GM12878 (cell line): ENCODE measurements at regions of chr1 and their contacts with region 1.

Region 1: DNA sequence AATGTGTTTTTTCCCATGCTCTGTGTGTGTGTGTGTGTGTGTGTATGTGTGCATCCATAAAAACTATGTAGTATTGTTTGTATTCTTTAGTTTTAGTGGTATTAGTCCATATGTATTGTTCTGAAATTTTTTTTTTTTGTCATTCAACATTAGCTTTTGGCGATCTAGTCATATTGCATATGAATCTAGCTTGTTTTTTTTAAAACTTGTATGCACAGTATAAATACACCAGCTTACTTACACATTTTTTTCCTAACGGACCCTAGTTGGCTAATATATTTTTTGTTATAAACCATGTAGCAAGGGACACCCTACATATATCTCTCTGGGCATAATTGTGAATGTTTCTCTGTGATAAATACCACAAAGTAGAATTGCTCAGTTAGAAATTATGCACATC is 359.7 kb downstream of the SRGAP2C start:
- DNase-seq: no peak
- ATAC-seq: no peak
- H3K4me3 ChIP-seq: no peak overlapping the region
- H3K27ac ChIP-seq: no peak overlapping the region
- H3K4me1 ChIP-seq: no peaks in the 10 kb centered on the region
- H3K27me3 ChIP-seq: no peaks in the 10 kb centered on the region
- CTCF ChIP-seq: no peak
- EP300 ChIP-seq: no peak
- POLR2A ChIP-seq: no peak
- RAD21 ChIP-seq: no peak

Region 2: DNA sequence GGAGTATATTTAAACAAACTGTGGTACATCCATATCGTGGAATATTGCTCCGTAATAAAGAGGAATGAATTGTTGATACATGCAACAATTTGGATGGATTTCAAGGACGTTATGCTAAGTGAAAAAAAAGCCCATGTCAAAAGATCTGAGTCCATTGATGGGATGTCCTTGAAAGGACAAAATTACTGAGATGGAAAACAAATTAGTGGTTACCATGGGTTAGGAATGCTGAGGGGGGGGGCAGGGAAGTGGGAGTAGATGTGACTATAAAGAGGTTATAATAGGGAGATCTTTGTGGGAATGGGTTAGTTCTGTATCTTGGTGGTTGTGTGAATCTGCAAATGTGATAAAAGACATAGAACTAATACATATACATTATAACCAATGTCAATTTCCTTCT is 49.6 kb after region 1 on chr1:
- CTCF ChIA-PET with region 1: no interaction called
- POLR2A ChIA-PET with region 1: no interaction called
- RAD21 ChIA-PET with region 1: no interaction called
- SMC1A ChIA-PET with region 1: no interaction called
- in situ Hi-C with region 1: no loop called
- intact Hi-C with region 1: loop called (anchors 5 kb)
- DNase-seq: no peak
- ATAC-seq: no peak
- H3K4me3 ChIP-seq: no peak overlapping the region
- H3K27ac ChIP-seq: no peak overlapping the region
- H3K4me1 ChIP-seq: no peaks in the 10 kb centered on the region
- H3K27me3 ChIP-seq: no peaks in the 10 kb centered on the region
- CTCF ChIP-seq: no peak
- EP300 ChIP-seq: no peak
- POLR2A ChIP-seq: no peak
- RAD21 ChIP-seq: no peak